PC-9 (cell line): ENCODE measurements at regions of chr10 and their contacts with region 1.

Region 1: DNA sequence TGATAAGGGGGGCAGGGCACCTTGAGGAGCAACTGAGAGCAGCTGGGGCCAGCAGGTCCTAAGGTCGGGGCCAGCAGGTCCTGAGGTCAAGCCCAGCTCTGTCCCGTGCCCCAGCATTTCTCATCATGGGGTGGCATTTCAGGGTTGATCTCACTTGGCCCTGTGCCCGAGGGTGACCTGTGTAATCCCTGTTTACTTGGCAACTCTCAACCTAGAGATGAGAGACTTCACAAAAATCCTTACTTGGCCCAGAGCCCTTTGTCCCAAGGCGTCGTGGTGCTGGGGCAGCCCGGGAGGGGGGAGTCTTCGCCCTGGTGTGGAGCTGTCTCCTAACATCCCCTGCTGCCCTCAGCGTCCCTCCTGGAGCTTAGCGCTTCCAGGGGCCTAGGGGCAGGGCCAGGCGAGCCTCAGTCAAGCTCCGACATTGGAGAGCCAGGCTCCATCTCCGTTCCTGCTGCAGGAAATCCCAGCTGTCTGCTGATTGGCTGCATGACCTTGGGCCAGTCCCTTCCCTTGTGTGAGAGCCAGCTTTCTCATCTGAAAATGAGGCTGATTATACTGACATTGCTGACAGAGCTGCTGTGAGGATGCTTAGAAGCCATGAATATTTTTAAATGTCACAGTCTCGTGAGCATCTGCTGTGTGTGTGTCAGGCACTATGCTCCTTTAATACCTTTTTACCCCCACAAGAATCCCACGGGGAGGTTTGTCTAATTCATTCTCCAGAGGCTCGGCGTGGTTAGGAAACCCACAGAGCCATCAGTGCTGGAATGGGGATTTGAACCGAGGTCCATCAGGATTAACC is 94.3 kb downstream of the ZMIZ1 start:
- DNase-seq: peak; percentile 86 to 88
- H3K4me3 ChIP-seq: no peak overlapping the region
- H3K27ac ChIP-seq: peak overlapping the region; percentile 39; the same call in 1 of the 2 replicates
- H3K4me1 ChIP-seq: peaks cover 24% of the 10 kb centered on the region
- H3K27me3 ChIP-seq: no peaks in the 10 kb centered on the region
- CTCF ChIP-seq: no peak

Region 2: DNA sequence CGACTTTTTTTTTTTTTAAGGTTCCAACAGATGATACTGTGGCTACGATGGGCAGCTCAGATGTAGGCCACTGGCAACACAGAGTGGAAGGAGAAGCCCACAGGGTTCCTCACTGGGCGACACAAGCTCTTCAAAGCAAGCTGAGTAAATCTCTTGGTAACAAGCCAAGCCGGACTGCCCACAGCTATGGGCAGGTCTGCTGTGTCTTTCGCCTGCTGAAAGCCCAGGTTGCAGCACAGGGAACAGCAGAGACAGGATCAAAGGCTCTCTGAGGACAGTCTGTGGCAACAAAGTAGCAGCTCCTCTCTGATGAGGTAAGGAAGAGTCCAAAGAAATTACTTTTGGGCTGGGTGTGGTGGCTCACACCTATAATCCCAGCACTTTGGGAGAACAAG is 1609.1 kb before region 1 on chr10:
- CTCF ChIA-PET with region 1: no interaction called
- POLR2A ChIA-PET with region 1: interaction called, 24 read pairs
- intact Hi-C with region 1: no loop called
- DNase-seq: no peak
- H3K4me3 ChIP-seq: no peak overlapping the region
- H3K27ac ChIP-seq: no peak overlapping the region
- H3K4me1 ChIP-seq: no peaks in the 10 kb centered on the region
- H3K27me3 ChIP-seq: no peaks in the 10 kb centered on the region
- CTCF ChIP-seq: no peak